ENCODE measurements at regions of chr2 and their contacts with region 1.

Region 1: DNA sequence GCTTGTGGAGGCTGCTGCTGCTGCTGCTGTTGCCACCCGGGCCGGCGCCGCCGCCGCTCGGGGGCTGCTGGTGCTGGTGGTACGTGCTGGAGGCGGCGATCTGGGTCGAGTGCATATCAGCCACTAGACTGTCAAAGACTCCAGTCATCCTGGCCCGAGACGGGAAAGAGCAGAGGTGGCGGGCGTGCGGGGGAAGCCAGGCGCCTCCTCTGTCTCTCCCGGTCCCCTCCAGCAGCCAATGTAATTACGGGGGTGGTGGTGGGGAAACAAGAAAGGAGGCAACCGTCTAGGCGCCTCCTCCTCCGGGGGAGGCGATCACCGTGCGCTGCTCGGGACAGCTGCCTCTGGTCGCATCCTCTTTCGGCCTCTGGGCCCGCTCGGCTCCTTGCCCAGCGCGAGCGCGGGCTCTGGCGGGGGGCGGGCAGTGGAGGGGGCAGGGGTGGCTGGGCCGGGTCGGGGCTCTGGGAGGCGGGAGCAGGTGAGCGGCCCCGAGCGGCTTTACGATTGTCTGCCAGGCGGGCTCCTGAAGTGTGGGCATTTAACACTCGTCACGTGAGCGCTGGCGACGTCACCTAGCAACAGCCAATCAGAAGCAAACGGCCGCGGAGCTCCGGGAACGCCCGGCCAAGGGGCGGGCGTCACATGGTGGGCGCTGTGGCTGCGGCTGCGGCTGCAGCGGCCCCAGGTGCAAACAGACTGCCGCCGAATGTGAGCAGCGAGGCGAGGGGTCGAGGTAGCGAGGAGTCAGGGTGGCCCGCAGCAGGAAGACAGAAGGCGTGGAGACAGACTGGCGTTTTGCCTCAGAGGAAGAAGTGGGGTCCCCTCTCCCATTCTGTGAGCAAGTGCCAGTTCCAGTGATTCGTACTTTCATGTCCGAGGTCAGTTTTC is at the start of gene DLX2:
- DNase-seq: peak; percentile 85
- ATAC-seq: peak; percentile 50
- H3K4me3 Mint-ChIP-seq: peak within 1 kb of the TSS; percentile 73
- H3K27ac Mint-ChIP-seq: peak within 1 kb of the TSS; percentile 66
- H3K4me1 Mint-ChIP-seq: peaks cover 48% of the 10 kb centered on the region
- H3K27me3 Mint-ChIP-seq: peaks cover 60% of the 10 kb centered on the region
- total RNA-seq, gene DLX2: not detected

Region 2: DNA sequence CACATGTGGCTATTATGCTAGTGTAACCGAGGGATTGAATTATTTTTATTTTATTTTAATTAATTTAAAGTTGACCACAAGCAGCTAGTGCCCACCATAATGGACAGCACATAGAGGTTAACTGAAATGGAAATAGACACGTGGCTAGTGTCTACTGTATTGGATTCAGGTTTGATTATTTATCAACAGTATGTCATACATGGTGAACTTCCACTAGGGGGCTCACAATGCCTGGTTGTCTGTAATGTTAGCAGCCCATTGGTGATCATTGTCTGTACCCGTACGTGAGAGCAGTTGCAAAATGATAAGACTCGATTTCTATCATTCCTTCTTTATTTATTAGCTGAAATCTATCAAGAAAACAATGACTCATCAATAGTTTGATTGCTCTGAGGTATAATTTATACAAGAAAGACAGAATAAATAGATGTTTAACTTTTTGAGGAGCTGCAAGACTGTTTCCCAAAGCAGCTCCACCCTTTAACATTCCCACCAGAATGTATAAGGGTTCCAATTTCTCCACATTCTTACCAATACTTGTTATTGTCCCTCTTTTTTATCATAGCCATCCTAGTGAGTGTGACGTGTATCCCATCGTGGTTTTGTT is 503.8 kb before region 1 on chr2:
- CTCF ChIA-PET with region 1: interaction called, 7 read pairs
- POLR2A ChIA-PET with region 1: no interaction called
- intact Hi-C with region 1: loop called (anchors 1 kb)
- DNase-seq: peak; percentile 69
- ATAC-seq: peak; percentile 100
- H3K4me3 Mint-ChIP-seq: no peak overlapping the region
- H3K27ac Mint-ChIP-seq: no peak overlapping the region
- H3K4me1 Mint-ChIP-seq: no peaks in the 10 kb centered on the region
- H3K27me3 Mint-ChIP-seq: peaks cover 2% of the 10 kb centered on the region

Region 3: GRCh38 chr2:171811245-171811628 is 291.4 kb before region 1 on chr2:
- CTCF ChIA-PET with region 1: interaction called, 11 read pairs
- POLR2A ChIA-PET with region 1: no interaction called
- intact Hi-C with region 1: loop called (anchors 1 kb)
- DNase-seq: no peak
- ATAC-seq: no peak
- H3K4me3 Mint-ChIP-seq: no peak overlapping the region
- H3K27ac Mint-ChIP-seq: no peak overlapping the region
- H3K4me1 Mint-ChIP-seq: no peaks in the 10 kb centered on the region
- H3K27me3 Mint-ChIP-seq: no peaks in the 10 kb centered on the region

Region 4: GRCh38 chr2:171999604-172000469 is 102.8 kb before region 1 on chr2 and contains the start of gene METAP1D:
- CTCF ChIA-PET with region 1: no interaction called
- POLR2A ChIA-PET with region 1: no interaction called
- intact Hi-C with region 1: loop called (anchors 2 kb)
- DNase-seq: peak; percentile 93
- ATAC-seq: peak; percentile 95
- H3K4me3 Mint-ChIP-seq: peak within 1 kb of the TSS; percentile 75
- H3K27ac Mint-ChIP-seq: peak within 1 kb of the TSS; percentile 87
- H3K4me1 Mint-ChIP-seq: peaks cover 18% of the 10 kb centered on the region
- H3K27me3 Mint-ChIP-seq: no peaks in the 10 kb centered on the region
- total RNA-seq, gene METAP1D: 5.3 to 6.0 TPM

Region 5: GRCh38 chr2:172131713-172132555 is 29.3 kb after region 1 on chr2:
- CTCF ChIA-PET with region 1: interaction called, 27 read pairs
- POLR2A ChIA-PET with region 1: no interaction called
- intact Hi-C with region 1: no loop called
- DNase-seq: no peak
- ATAC-seq: no peak
- H3K4me3 Mint-ChIP-seq: no peak overlapping the region
- H3K27ac Mint-ChIP-seq: no peak overlapping the region
- H3K4me1 Mint-ChIP-seq: no peaks in the 10 kb centered on the region
- H3K27me3 Mint-ChIP-seq: peaks cover 2% of the 10 kb centered on the region

Region 6: DNA sequence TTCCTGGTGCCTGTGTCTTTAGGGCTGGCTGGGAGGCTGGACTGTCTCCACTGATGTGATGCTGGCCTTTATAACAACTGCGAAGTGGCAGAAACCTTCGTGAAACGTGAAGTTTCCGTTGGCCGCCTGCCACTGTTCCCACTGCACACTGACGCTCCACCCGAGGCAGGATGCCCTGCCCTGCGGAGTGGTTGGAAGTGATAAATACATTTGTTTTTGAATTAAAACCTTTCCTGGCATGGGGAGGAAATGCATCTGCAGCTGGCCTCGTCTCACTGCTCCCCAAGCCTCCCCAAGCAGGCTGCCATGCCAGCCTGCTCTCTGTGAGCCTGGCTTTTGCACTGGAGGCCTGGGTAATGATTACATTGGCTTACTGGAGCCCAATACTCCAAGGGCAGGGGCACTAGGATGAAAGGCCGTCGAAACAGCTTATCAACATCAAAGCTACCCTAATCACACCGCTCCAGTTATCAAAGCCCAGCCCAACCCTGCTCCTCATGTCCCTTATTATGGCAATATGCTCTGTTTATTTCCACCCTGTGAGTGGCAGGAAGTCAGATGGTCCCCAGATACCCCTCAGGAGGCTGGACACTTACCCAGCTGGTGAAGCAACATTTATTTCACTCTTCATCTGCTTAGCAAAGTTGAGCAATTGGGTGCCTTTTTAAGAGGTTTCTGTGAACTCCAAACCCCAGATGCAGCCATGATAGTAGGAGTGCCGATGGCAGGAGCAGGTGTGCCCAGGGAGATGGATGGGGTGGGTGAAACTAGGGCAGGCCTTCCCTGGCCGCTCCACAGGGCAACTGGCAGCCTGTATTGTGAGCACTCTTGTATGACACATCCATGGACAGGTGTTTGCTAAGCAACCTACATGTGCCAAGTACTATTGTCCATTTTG is 227.4 kb after region 1 on chr2:
- CTCF ChIA-PET with region 1: no interaction called
- POLR2A ChIA-PET with region 1: no interaction called
- intact Hi-C with region 1: no loop called
- DNase-seq: no peak
- ATAC-seq: no peak
- H3K4me3 Mint-ChIP-seq: no peak overlapping the region
- H3K27ac Mint-ChIP-seq: no peak overlapping the region
- H3K4me1 Mint-ChIP-seq: peaks cover 9% of the 10 kb centered on the region
- H3K27me3 Mint-ChIP-seq: no peaks in the 10 kb centered on the region

Region 7: GRCh38 chr2:172722481-172722880 is 619.8 kb after region 1 on chr2:
- CTCF ChIA-PET with region 1: no interaction called
- POLR2A ChIA-PET with region 1: no interaction called
- intact Hi-C with region 1: no loop called
- DNase-seq: no peak
- ATAC-seq: no peak
- H3K4me3 Mint-ChIP-seq: no peak overlapping the region
- H3K27ac Mint-ChIP-seq: no peak overlapping the region
- H3K4me1 Mint-ChIP-seq: no peaks in the 10 kb centered on the region
- H3K27me3 Mint-ChIP-seq: peaks cover 5% of the 10 kb centered on the region